Aorta (tissue), 5 donors: ENCODE measurements at regions of chr9 and their contacts with region 1.

Region 1: DNA sequence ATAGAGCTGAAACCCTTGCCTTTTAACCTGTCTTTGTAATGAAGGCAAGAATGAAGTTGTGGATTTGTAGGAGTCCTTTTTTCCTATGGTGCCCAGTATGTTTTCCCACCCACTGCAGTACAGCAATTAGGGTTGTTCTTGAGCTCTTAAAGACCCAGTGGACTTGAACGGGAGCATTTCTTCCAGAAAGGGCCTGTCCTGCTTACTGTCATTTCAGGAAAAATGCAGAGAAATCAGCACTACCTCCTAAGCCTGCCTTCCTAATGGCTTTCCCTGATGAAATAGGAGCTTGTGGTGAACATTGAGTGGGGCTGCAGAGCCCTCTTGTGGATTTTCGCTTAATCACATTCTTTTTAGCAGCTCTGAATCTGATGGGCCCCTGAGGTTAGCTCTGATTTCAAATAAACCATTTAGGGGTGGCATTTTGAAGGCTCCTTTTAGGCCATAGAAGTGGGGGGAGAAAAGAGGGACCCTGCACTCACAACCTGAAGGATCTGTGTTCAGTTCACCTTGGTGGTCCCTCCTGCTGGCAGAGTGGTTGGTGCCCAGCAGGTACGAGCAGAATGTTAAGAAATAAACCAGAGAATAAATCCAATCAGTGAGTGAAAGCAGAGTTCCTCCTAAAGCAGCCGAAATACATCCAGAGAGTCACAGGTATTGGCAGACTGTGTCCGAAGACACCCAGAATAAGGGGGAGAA is 188.0 kb upstream of the KLF9 start:
- DNase-seq: no peak
- ATAC-seq: peak; percentile 88
- H3K4me3 ChIP-seq: no peak overlapping the region
- H3K27ac ChIP-seq: peak overlapping the region; percentile 60 to 85
- H3K4me1 ChIP-seq: peaks cover 2 to 3% of the 10 kb centered on the region in 2 donors
- H3K27me3 ChIP-seq: no peaks in the 10 kb centered on the region

Region 2: DNA sequence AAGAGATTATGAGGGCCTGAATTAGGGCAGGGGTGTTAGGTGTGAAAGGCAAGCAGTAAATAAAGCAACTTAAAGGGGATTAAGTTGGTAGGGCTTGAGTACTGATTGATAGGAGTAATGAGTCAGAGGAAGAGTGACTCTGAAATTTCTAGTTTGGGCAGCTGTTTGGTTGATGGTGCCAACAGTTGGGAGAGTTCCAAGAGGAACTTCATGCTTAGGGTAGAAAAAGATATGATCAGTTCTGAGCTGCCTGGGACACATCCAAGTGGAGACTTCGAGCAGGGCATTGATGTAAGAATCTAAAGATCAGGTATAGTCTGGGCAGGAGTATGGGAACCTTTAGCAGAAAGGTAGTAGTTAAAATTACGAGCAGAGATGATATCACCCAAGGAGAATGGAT is 548.6 kb before region 1 on chr9:
- intact Hi-C with region 1: loop called in 1 of 2 experiments (anchors 5 kb)
- DNase-seq: no peak
- ATAC-seq: no peak
- H3K4me3 ChIP-seq: no peak overlapping the region
- H3K27ac ChIP-seq: peak overlapping the region; percentile 14 to 78
- H3K4me1 ChIP-seq: peaks cover 0 to 11% of the 10 kb centered on the region in 2 donors
- H3K27me3 ChIP-seq: no peaks in the 10 kb centered on the region

Region 3: DNA sequence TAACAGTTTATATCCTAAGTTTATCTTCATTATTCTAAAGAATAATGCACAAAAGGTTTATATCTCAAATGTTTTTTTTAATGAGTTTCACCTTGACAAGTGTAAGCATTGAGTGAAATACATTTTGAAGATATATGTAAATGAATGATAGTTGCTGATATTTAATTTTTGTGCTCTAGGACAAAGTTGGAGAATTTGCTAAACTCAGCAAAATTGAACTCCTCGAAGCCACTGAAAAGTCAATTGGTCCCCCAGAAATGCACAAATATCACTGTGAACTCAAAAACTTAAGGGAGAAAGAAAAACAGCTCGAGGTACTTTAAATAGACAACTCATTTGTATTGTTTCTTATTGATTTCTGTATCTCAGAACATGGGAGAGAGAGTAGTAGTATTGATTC is 324.2 kb before region 1 on chr9:
- intact Hi-C with region 1: loop called in 1 of 2 experiments (anchors 10 kb)
- DNase-seq: no peak
- ATAC-seq: no peak
- H3K4me3 ChIP-seq: no peak overlapping the region
- H3K27ac ChIP-seq: no peak overlapping the region
- H3K4me1 ChIP-seq: no peaks in the 10 kb centered on the region
- H3K27me3 ChIP-seq: no peaks in the 10 kb centered on the region

Region 4: GRCh38 chr9:70352802-70353201 is 249.7 kb before region 1 on chr9:
- intact Hi-C with region 1: loop called (anchors 2 to 5 kb)
- DNase-seq: no peak
- ATAC-seq: no peak
- H3K4me3 ChIP-seq: no peak overlapping the region
- H3K27ac ChIP-seq: no peak overlapping the region
- H3K4me1 ChIP-seq: no peaks in the 10 kb centered on the region
- H3K27me3 ChIP-seq: no peaks in the 10 kb centered on the region

Region 5: GRCh38 chr9:70406434-70406862 is 196.0 kb before region 1 on chr9:
- intact Hi-C with region 1: no loop called
- DNase-seq: no peak
- ATAC-seq: no peak
- H3K4me3 ChIP-seq: no peak overlapping the region
- H3K27ac ChIP-seq: peak overlapping the region in 1 of 2 donors; percentile 66
- H3K4me1 ChIP-seq: peaks cover 6 to 22% of the 10 kb centered on the region in 2 donors
- H3K27me3 ChIP-seq: no peaks in the 10 kb centered on the region

Region 6: GRCh38 chr9:70484210-70485130 is 118.0 kb before region 1 on chr9:
- intact Hi-C with region 1: loop called (anchors 2 to 5 kb)
- DNase-seq: no peak
- ATAC-seq: peak; percentile 83
- H3K4me3 ChIP-seq: no peak overlapping the region
- H3K27ac ChIP-seq: no peak overlapping the region
- H3K4me1 ChIP-seq: peaks cover 6 to 18% of the 10 kb centered on the region in 2 donors
- H3K27me3 ChIP-seq: no peaks in the 10 kb centered on the region

Region 7: DNA sequence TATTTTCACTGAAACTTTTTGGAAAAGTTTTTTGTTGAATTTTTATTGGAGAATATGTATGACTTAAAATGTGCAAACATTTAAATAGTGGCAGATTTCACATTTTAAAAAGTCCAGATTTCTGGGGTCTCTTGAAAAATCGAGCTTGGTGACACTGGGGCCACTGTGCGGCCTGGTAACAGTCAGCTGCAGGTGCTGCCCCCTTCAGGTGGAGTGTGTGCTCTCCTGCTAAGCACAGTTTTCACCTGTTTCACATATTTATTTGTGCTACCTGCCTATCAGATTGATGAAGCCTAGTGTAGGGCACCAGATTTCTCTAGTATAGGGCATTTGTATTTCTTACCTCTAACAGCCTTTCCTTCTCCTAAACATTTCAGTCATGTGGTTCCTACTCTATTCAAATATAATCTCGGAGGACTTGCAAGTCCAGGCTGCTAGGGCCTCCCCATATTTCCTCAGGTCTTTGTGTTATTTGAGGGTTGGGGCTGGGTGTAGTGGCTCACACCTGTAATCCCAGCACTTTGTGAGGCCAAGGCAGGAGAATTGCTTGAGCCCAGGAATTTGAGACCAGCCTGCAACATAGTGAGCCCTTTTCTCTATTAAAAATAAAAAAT is 92.2 kb before region 1 on chr9:
- intact Hi-C with region 1: no loop called
- DNase-seq: no peak
- ATAC-seq: no peak
- H3K4me3 ChIP-seq: no peak overlapping the region
- H3K27ac ChIP-seq: no peak overlapping the region
- H3K4me1 ChIP-seq: no peaks in the 10 kb centered on the region
- H3K27me3 ChIP-seq: no peaks in the 10 kb centered on the region

Region 8: GRCh38 chr9:70947086-70947485 is 344.6 kb after region 1 on chr9:
- intact Hi-C with region 1: no loop called
- DNase-seq: no peak
- ATAC-seq: no peak
- H3K4me3 ChIP-seq: no peak overlapping the region
- H3K27ac ChIP-seq: no peak overlapping the region
- H3K4me1 ChIP-seq: peaks cover 1 to 2% of the 10 kb centered on the region in 2 donors
- H3K27me3 ChIP-seq: peaks cover 0 to 3% of the 10 kb centered on the region in 2 donors